Heart right ventricle (tissue), 16 donors: ENCODE measurements at regions of chr10 and their contacts with region 1.

Region 1: DNA sequence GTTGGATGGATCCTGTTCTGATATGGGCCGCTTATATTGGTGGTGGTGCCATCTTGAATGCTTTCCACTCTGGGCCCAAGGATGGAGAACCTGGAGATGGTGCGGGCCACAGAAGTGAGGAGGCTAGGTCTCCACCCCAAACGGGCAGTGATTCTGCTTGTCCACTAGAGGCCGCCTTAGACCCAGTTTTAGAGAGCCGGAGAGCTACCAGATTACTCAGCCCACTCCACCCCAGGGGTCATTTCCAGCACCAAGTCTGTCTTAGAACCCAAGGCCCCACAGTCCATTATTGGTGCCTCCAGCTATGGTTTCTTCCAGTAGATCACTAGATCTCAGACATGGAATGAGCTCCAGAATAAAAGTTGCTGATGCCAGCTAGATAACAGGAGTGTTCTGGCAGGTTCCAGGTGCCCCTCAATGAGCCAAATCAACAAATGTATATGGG is 11.8 kb upstream of the CAMK2G start:
- DNase-seq: peak; percentile 48 to 88
- ATAC-seq: peak; percentile 77 to 90 (median 86)
- H3K4me3 ChIP-seq: no peak overlapping the region
- H3K27ac ChIP-seq: peak overlapping the region in 9 of 10 donors; percentile 72 to 92 (median 87)
- H3K4me1 ChIP-seq: peaks cover 26 to 34% (median 31%) of the 10 kb centered on the region in 9 donors
- H3K27me3 ChIP-seq: no peaks in the 10 kb centered on the region
- CTCF ChIP-seq: peak; percentile 57 to 93 (median 86)

Region 2: GRCh38 chr10:73837072-73837471 is 49.0 kb before region 1 on chr10:
- intact Hi-C with region 1: no loop called
- DNase-seq: no peak
- ATAC-seq: no peak
- H3K4me3 ChIP-seq: no peak overlapping the region
- H3K27ac ChIP-seq: no peak overlapping the region
- H3K4me1 ChIP-seq: no peaks in the 10 kb centered on the region
- H3K27me3 ChIP-seq: no peaks in the 10 kb centered on the region
- CTCF ChIP-seq: no peak

Region 3: DNA sequence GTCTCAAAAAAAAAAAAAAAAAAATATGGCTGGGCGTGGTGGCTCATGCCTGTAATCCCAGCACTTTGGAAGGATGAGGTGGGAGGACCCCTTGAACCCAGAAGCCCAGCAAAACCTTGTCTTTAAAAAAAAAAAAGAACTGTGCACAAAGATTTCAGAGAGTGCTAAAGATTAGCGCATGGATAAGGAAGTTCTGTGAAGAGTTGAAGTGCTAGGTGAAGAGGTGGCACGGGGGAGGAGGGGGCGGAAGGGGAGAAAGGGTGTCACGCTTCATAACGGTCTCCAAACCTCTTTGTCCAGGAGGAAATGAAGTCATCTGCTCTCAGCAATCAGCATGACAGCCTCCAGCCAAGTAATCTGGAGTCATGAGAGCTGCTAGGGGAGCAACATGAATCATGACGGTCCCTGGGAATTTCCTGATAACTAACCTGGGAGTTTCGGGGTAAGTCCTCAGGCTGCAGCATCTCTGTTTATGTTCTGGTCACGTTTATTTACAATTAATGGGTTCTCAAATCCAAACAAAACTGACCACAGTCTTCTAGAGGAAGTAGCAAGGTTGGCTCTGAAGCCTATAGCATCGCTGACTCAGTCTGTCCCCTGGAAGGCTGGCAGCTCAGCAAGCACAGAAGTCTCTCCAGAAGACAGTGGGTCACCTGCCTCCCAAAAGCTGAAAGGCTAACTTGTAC is 22.9 kb after region 1 on chr10:
- intact Hi-C with region 1: loop called in 1 of 10 experiments (anchors 2 kb)
- DNase-seq: peak in 1 of 2 donors; percentile 69
- ATAC-seq: peak in 7 of 8 donors; percentile 5 to 57 (median 32)
- H3K4me3 ChIP-seq: peak overlapping the region in 3 of 10 donors; percentile 10 to 15 (median 13)
- H3K27ac ChIP-seq: peak overlapping the region in 9 of 10 donors; percentile 53 to 95 (median 88)
- H3K4me1 ChIP-seq: peaks cover 5 to 87% (median 50%) of the 10 kb centered on the region in 9 donors
- H3K27me3 ChIP-seq: peaks cover 0 to 14% (median 0%) of the 10 kb centered on the region in 7 donors
- CTCF ChIP-seq: no peak

Region 4: DNA sequence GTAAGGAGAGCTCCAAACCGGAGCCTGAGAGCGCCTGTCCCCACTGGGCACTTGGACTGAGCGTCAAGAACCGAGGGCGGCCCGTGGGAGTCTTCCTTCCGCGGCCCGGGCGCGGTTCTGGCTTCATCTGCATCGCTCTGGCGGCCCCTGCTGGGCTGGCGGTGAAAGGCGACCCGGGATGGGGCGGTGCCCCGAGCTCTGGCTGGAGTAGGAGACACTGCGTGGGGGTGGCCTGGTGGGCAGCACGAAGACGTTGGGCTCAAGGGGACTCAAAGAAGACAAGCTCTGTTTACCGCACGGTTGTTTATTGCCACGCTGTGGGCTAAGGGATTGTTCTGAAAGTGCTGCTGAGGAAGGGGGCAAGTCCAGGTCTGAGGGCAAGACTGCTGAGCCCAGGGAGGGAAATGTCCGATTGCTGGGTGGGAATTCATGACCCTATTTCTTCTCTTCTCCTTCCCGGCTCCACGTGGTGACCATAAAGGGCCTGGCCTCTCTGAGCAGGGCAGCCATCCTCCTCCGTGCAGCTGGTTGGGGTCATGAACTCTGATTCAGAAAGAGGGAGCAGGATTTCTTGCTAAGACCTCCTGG is 54.6 kb after region 1 on chr10:
- intact Hi-C with region 1: loop called (anchors 1 to 5 kb)
- DNase-seq: peak; percentile 89 to 92
- ATAC-seq: peak; percentile 90 to 94 (median 94)
- H3K4me3 ChIP-seq: peak overlapping the region in 5 of 10 donors; percentile 2 to 23 (median 18)
- H3K27ac ChIP-seq: peak overlapping the region; percentile 24 to 89 (median 75)
- H3K4me1 ChIP-seq: peaks cover 15 to 55% (median 36%) of the 10 kb centered on the region in 9 donors
- H3K27me3 ChIP-seq: no peaks in the 10 kb centered on the region
- CTCF ChIP-seq: peak; percentile 83 to 99 (median 97)

Region 5: DNA sequence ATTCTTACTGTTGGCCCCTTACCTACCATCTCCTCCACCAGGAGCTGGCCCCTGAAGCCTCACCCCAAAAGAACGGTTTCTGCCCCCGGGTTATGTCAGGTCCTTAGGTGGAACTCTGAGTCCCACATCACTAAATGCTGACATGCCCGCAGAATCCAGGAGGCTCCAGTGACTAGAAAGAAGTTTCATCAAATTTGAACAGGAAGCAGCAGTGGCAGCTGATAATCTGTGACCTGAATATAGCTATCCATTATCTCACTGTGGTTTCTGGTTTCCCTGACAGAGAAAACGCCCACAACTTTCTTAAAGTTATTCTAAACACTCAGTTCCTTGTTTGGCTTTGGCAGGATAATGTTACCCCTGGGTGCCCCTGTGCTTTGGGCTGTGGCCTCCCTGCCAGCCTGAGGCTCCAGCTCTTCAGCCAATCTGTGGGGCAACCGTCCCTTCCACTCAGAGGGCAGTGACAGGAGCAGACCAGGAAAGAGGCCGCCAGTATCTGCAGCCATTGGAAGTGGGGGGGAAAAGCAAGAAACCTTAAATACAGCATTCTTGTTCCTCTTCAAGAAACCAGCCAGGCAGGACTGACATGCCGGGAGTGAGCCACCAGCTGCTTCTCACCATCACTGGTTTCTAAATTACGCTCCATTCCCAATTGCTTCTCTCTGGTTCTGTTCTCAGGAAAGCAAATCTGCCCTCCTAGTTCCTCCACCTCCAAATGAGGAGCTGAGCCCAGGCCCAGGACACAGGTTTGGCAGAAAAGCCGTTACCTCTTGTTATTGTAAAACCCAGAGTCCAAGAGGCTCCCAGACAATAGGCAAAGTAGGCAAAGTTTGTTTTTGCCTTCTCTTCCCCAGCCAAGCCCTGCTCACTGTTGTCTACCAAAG is 70.6 kb after region 1 on chr10:
- intact Hi-C with region 1: loop called in 1 of 10 experiments (anchors 5 kb)
- DNase-seq: no peak
- ATAC-seq: peak; percentile 53 to 78 (median 70)
- H3K4me3 ChIP-seq: no peak overlapping the region
- H3K27ac ChIP-seq: peak overlapping the region in 9 of 10 donors; percentile 21 to 74 (median 61)
- H3K4me1 ChIP-seq: peaks cover 5 to 60% (median 11%) of the 10 kb centered on the region in 9 donors
- H3K27me3 ChIP-seq: no peaks in the 10 kb centered on the region
- CTCF ChIP-seq: no peak